PC-3 (cell line): ENCODE measurements at regions of chr13 and their contacts with region 1.

Region 1: GRCh38 chr13:75934889-75935288 is 298.8 kb downstream of the LMO7 start:
- DNase-seq: peak; percentile 80
- ATAC-seq: peak; percentile 86
- H3K4me3 ChIP-seq: no peak overlapping the region; the same call in 1 of the 2 replicates
- H3K27ac ChIP-seq: peak overlapping the region; percentile 32
- H3K4me1 ChIP-seq: peaks cover 38% of the 10 kb centered on the region
- H3K27me3 ChIP-seq: no peaks in the 10 kb centered on the region
- CTCF ChIP-seq: no peak

Region 2: GRCh38 chr13:76009491-76009890 is 74.6 kb after region 1 on chr13:
- CTCF ChIA-PET with region 1: no interaction called
- POLR2A ChIA-PET with region 1: no interaction called
- intact Hi-C with region 1: loop called (anchors 10 kb)
- DNase-seq: peak; percentile 66
- ATAC-seq: peak; percentile 84
- H3K4me3 ChIP-seq: no peak overlapping the region
- H3K27ac ChIP-seq: peak overlapping the region; percentile 58
- H3K4me1 ChIP-seq: peaks cover 31% of the 10 kb centered on the region
- H3K27me3 ChIP-seq: no peaks in the 10 kb centered on the region
- CTCF ChIP-seq: no peak

Region 3: DNA sequence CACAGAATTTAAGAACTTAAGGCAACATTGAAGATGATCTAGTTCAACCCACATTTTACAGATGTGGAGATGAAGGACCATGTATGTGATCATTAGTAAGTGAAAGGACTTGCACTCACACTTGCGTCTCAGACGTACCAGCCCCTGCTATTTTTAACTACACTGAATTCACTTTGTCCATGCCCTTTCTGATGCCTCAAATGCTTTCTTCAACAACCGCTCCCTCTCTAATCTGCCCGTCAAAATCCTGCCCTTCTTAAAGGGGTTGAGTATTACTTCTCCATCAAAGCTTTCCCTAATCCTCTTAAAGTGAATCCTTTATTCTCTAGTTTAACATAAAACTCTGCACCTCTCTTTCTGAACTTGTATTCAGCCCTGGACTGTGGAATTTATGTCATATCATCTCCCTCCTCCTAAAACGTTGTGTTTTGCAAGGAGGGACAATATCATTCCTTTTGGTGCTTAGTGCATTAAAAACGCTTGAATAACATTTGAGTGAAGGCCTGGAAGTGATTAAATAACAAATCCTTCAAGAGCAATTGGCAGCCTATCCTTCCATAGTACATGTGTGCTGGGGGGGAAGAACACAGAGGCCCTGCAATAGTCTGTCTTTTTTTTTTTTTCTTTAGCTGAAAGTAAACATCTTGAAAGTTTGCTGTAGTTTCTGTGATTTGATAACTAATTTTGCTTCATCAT is 194.6 kb after region 1 on chr13:
- CTCF ChIA-PET with region 1: no interaction called
- POLR2A ChIA-PET with region 1: no interaction called
- intact Hi-C with region 1: no loop called
- DNase-seq: no peak
- ATAC-seq: no peak
- H3K4me3 ChIP-seq: no peak overlapping the region
- H3K27ac ChIP-seq: no peak overlapping the region
- H3K4me1 ChIP-seq: no peaks in the 10 kb centered on the region
- H3K27me3 ChIP-seq: no peaks in the 10 kb centered on the region
- CTCF ChIP-seq: no peak